ENCODE measurements at regions of chr5 and their contacts with region 1.

Region 1: GRCh38 chr5:35668794-35669193 is 51.1 kb downstream of the SPEF2 start:
- DNase-seq: no peak
- ATAC-seq: no peak
- H3K4me3 ChIP-seq: no peak overlapping the region
- H3K27ac ChIP-seq: no peak overlapping the region
- H3K4me1 ChIP-seq: no peaks in the 10 kb centered on the region
- H3K27me3 ChIP-seq: no peaks in the 10 kb centered on the region
- CTCF ChIP-seq: no peak
- POLR2A ChIP-seq: no peak
- RAD21 ChIP-seq: no peak

Region 2: DNA sequence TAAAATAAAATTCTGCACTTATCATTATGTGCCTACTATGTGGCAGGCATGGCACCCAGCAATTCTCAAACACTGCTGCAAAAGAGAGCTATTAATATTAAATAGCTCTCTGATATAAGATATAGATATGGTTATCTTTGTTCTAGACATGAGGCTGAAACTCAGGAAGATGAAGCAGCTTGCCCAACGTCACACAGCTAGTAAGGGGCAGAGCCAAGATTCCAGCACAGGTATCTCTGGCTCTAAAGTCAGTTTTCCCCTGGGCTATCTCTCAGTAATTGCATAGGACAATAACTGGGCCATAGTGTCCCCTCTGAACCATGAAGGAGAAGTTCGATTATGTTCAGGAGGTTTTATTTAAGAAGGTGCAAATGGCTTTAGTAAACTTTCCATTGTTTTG is 41.2 kb before region 1 on chr5:
- CTCF ChIA-PET with region 1: no interaction called
- POLR2A ChIA-PET with region 1: no interaction called
- dilution Hi-C with region 1: no loop called
- in situ Hi-C with region 1: no loop called
- intact Hi-C with region 1: loop called (anchors 1 kb)
- DNase-seq: no peak
- ATAC-seq: no peak
- H3K4me3 ChIP-seq: no peak overlapping the region
- H3K27ac ChIP-seq: no peak overlapping the region
- H3K4me1 ChIP-seq: no peaks in the 10 kb centered on the region
- H3K27me3 ChIP-seq: no peaks in the 10 kb centered on the region
- CTCF ChIP-seq: no peak
- POLR2A ChIP-seq: no peak
- RAD21 ChIP-seq: no peak

Region 3: GRCh38 chr5:35803191-35803651 is 134.4 kb after region 1 on chr5:
- CTCF ChIA-PET with region 1: no interaction called
- POLR2A ChIA-PET with region 1: no interaction called
- dilution Hi-C with region 1: no loop called
- in situ Hi-C with region 1: no loop called
- intact Hi-C with region 1: no loop called
- DNase-seq: peak; percentile 79
- ATAC-seq: peak; percentile 94
- H3K4me3 ChIP-seq: no peak overlapping the region
- H3K27ac ChIP-seq: no peak overlapping the region
- H3K4me1 ChIP-seq: peaks cover 5% of the 10 kb centered on the region
- H3K27me3 ChIP-seq: no peaks in the 10 kb centered on the region
- CTCF ChIP-seq: no peak
- POLR2A ChIP-seq: no peak
- RAD21 ChIP-seq: no peak